ENCODE measurements at regions of chr9 and their contacts with region 1.

Region 1: DNA sequence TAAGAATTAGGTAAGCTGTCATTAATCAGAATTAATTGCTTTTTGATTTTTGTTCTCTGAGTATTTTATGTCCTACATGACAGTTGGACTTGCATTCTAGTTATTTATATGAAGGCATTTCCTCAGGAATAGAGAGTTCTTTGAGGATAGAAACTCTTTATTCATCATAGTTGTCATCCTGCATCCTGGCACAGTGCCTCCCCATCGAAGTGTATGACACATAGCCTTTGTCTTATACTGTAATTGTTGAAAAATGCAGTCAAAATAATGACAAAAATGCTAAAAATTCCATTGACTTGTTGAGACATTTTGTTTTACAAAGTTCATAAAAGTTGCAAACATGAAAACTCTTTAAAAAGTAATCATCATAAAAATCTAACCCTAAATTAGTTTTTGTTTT is 36.5 kb downstream of the CFAP95 start:
- DNase-seq: no peak
- H3K4me3 ChIP-seq: no peak overlapping the region
- H3K27ac ChIP-seq: no peak overlapping the region
- H3K4me1 ChIP-seq: no peaks in the 10 kb centered on the region
- H3K27me3 ChIP-seq: no peaks in the 10 kb centered on the region
- CTCF ChIP-seq: no peak
- EP300 ChIP-seq: no peak
- POLR2A ChIP-seq: no peak

Region 2: DNA sequence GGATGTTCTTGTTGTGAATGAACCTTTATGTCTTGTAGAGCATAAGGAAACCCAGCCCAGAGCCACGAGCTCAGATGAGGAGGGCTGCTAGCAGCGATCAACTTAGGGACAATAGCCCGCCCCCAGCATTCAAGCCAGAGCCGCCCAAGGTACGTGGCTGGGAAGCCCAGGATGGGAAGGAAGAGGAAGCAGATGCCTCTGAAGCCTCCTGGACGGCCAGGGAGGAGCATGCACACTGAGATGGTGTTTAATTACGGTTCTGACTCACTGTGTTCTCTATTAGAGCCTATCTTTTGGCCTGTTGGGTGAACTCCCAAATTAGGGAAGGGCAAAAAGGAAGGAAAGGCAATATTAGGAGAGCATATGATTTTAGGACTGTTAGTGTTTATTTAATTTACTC is 607.8 kb before region 1 on chr9:
- in situ Hi-C with region 1: no loop called
- intact Hi-C with region 1: no loop called
- DNase-seq: no peak
- H3K4me3 ChIP-seq: no peak overlapping the region
- H3K27ac ChIP-seq: no peak overlapping the region
- H3K4me1 ChIP-seq: no peaks in the 10 kb centered on the region
- H3K27me3 ChIP-seq: no peaks in the 10 kb centered on the region
- CTCF ChIP-seq: no peak
- EP300 ChIP-seq: no peak
- POLR2A ChIP-seq: no peak

Region 3: DNA sequence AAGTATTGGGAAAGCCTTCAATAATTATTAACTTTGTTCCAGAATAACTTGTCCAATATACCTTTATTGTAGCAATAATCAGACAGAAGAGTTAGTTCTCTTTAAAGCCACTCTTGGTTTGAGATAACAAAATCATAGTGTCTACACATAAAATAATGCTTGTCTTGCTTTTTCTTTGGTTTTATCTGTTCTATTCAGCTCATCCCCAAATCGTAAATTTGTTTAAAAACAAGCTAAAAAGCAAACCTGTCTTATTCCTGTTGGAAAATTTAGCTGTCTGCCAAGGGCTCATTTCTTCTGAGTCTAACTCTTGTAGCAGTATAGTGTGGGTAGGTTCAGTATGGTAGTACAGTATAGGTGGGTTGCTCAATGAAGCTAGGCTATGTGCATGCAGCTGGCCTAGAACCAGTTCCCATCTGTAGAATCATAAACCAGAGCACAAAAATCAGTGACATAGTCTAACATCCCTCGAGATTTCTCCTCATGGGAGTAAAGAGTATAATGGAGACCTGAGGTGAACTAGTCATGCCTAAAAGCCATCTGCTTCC is 167.1 kb before region 1 on chr9:
- in situ Hi-C with region 1: no loop called
- intact Hi-C with region 1: no loop called
- DNase-seq: no peak
- H3K4me3 ChIP-seq: no peak overlapping the region
- H3K27ac ChIP-seq: no peak overlapping the region
- H3K4me1 ChIP-seq: peaks cover 0 to 4% (median 0%) of the 10 kb centered on the region in 4 donors
- H3K27me3 ChIP-seq: no peaks in the 10 kb centered on the region
- CTCF ChIP-seq: no peak
- EP300 ChIP-seq: no peak
- POLR2A ChIP-seq: no peak

Region 4: DNA sequence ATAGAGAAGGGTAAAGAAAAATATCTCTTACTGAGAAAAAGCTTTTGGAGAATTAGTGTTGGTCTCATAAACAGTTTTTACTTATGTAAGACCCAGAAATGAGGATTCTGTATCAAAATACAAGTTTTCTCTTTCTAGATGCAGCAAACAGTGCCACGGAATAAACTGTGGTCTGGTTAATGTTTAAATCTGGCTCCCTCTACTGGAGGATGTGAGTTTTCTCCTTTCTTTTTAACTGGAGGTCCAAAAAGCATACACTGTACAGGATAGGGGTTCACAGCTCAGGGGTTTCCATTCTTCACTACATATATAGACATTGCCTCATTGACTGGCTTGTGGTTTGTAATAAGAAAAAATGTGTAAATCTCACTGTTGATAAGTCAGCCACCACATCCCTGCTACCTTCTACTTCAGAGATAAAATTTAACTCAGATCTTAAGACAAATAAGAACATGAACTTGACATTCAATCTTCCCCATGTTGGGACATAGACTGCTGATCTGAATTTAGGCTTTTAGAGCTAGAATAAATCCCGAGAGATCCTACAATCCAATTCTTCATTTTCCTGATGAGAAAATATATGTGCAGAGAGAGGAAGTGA is 62.4 kb after region 1 on chr9:
- in situ Hi-C with region 1: loop called in 1 of 4 experiments (anchors 10 kb)
- intact Hi-C with region 1: no loop called
- DNase-seq: no peak
- H3K4me3 ChIP-seq: no peak overlapping the region
- H3K27ac ChIP-seq: no peak overlapping the region
- H3K4me1 ChIP-seq: no peaks in the 10 kb centered on the region
- H3K27me3 ChIP-seq: peaks cover 12% of the 10 kb centered on the region
- CTCF ChIP-seq: peak; percentile 51 to 68 (median 66)
- EP300 ChIP-seq: no peak
- POLR2A ChIP-seq: no peak

Region 5: DNA sequence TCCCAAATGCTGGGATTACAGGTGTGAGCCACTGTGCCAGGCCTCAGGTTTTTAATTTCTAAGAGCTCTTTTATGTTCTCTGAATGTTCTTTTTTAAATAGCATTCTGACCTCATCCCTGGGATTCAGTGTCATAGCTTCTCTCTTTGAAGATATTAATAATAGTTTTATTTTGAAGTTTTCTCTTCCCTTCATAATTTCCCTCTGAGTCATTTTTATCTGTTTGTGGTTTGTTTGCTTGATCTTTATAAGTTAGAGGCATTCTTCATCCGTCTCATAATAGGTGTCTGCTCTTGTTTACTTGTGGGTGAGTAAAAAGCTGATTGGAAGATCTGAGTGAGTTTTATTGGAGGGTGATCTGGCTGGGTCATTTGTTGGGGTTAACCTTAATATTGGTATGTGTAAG is 174.0 kb after region 1 on chr9:
- in situ Hi-C with region 1: no loop called
- intact Hi-C with region 1: loop called (anchors 5 kb)
- DNase-seq: no peak
- H3K4me3 ChIP-seq: no peak overlapping the region
- H3K27ac ChIP-seq: no peak overlapping the region
- H3K4me1 ChIP-seq: no peaks in the 10 kb centered on the region
- H3K27me3 ChIP-seq: no peaks in the 10 kb centered on the region
- CTCF ChIP-seq: no peak
- EP300 ChIP-seq: no peak
- POLR2A ChIP-seq: no peak

Measured in transverse colon (tissue), 4 donors.